Dendritic cell treated with granulocyte-macrophage colony-stimulating factor and Interleukin-4, amounts not matched to agents 40 ng/mL and 50 ng/mL, for 4 days (primary cell): ENCODE measurements at regions of chr6 and their contacts with region 1.

Region 1: GRCh38 chr6:85678602-85679444 is 36.1 kb upstream of the SYNCRIP start:
- H3K4me3 Mint-ChIP-seq: peak overlapping the region; percentile 91
- H3K27ac Mint-ChIP-seq: peak overlapping the region; percentile 98
- H3K4me1 Mint-ChIP-seq: peaks cover 28% of the 10 kb centered on the region
- H3K27me3 Mint-ChIP-seq: no peaks in the 10 kb centered on the region

Region 2: GRCh38 chr6:85593438-85594196 is 85.2 kb before region 1 on chr6 and contains the start of gene SNX14:
- intact Hi-C with region 1: loop called (anchors 1 kb)
- H3K4me3 Mint-ChIP-seq: peak within 1 kb of the TSS; percentile 96
- H3K27ac Mint-ChIP-seq: peak within 1 kb of the TSS; percentile 99
- H3K4me1 Mint-ChIP-seq: peaks cover 40% of the 10 kb centered on the region
- H3K27me3 Mint-ChIP-seq: no peaks in the 10 kb centered on the region

Region 3: GRCh38 chr6:85620308-85620707 is 58.5 kb before region 1 on chr6:
- intact Hi-C with region 1: loop called (anchors 10 kb)
- H3K4me3 Mint-ChIP-seq: no peak overlapping the region
- H3K27ac Mint-ChIP-seq: no peak overlapping the region
- H3K4me1 Mint-ChIP-seq: peaks cover 6% of the 10 kb centered on the region
- H3K27me3 Mint-ChIP-seq: no peaks in the 10 kb centered on the region

Region 4: GRCh38 chr6:85642774-85643536 is 35.9 kb before region 1 on chr6 and contains the start of gene SYNCRIP:
- intact Hi-C with region 1: loop called (anchors 1 kb)
- H3K4me3 Mint-ChIP-seq: peak within 1 kb of the TSS; percentile 99
- H3K27ac Mint-ChIP-seq: peak within 1 kb of the TSS; percentile 100
- H3K4me1 Mint-ChIP-seq: peaks cover 51% of the 10 kb centered on the region
- H3K27me3 Mint-ChIP-seq: no peaks in the 10 kb centered on the region